GM10248 (cell line): ENCODE measurements at regions of chr6 and their contacts with region 1.

Region 1: GRCh38 chr6:31366693-31367470 is 9.9 kb upstream of the HLA-B start:
- DNase-seq: peak; percentile 82
- CTCF ChIP-seq: peak; percentile 92

Region 2: GRCh38 chr6:31128093-31128676 is 238.7 kb before region 1 on chr6:
- CTCF ChIA-PET with region 1: interaction called, 15 read pairs
- POLR2A ChIA-PET with region 1: no interaction called
- DNase-seq: peak; percentile 81
- CTCF ChIP-seq: peak; percentile 76

Region 3: DNA sequence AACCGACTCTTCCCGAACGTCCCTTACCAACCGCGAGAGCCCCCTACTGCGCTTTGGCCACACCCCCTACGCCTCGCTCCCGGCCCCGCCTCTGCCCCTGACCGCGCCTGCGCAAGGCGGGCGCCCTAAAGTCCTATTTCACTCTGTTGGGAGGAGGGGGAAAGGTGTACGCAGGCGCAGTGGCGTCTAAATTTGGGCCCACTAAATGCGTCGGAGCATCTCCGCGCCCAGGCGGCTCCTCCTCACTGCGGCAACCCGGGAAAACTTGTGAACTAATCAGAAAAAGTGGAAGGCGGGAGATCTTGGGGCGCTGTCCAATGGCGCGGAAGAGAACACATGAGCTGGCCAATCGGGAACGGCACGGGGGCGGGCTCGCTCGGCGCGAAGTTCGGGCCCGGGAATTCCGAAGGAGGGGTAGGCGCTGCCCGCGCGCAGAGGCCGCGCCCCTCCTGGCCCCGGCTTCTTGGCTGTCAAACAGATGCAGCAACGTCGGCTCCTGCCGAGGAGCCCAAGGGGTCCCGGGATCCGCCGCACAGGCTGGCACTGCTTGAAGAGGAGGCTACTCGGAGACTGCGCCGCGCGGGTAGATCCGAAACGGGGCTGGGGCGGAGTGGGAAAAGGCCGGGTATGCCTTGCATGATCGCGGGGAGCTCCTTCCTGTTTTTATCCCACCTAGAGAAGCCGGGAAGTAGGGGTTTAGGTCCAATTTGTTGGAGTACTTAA is 208.6 kb before region 1 on chr6 and contains the start of gene TCF19:
- CTCF ChIA-PET with region 1: interaction called, 19 read pairs
- POLR2A ChIA-PET with region 1: no interaction called
- DNase-seq: peak; percentile 100
- CTCF ChIP-seq: no peak

Region 4: DNA sequence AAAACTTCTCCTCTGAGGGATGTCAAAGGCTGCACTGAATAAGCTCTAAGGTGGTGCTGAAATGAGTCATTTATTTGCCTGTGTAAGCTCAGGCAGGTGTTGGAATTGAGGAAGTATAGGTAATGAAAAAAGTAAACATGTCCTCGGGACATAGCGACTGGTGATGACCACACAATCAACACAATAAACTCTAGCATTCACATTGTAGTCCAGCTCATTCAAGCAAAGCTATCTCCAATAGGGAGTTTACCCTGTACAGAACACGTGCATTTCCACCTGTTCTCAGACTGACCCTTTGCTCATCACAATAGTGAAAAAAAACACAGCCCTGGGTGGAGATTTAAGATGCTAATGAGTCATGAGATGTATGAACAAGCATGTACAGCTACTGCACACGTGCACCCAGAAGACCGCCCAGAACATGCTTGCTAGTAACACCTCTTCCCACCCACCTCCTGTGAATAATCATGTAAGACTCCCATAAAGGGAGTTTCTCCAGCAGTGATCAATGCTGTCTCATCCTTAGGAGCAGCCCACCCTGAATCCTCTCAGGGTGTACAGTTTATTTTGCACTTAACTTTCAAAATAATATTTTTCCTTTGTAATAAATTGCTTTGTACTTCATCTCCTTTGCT is 163.4 kb before region 1 on chr6:
- CTCF ChIA-PET with region 1: interaction called, 82 read pairs
- POLR2A ChIA-PET with region 1: interaction called, 4 read pairs
- DNase-seq: peak; percentile 45
- CTCF ChIP-seq: no peak

Region 5: GRCh38 chr6:31351401-31352309 is 15.2 kb before region 1 on chr6:
- CTCF ChIA-PET with region 1: interaction called, 12 read pairs
- POLR2A ChIA-PET with region 1: interaction called, 3 read pairs
- DNase-seq: no peak
- CTCF ChIP-seq: no peak

Region 6: GRCh38 chr6:31441365-31442267 is 74.7 kb after region 1 on chr6:
- CTCF ChIA-PET with region 1: interaction called, 12 read pairs
- POLR2A ChIA-PET with region 1: no interaction called
- DNase-seq: peak; percentile 88
- CTCF ChIP-seq: peak; percentile 87